ENCODE measurements at regions of chr4 and their contacts with region 1.

Region 1: DNA sequence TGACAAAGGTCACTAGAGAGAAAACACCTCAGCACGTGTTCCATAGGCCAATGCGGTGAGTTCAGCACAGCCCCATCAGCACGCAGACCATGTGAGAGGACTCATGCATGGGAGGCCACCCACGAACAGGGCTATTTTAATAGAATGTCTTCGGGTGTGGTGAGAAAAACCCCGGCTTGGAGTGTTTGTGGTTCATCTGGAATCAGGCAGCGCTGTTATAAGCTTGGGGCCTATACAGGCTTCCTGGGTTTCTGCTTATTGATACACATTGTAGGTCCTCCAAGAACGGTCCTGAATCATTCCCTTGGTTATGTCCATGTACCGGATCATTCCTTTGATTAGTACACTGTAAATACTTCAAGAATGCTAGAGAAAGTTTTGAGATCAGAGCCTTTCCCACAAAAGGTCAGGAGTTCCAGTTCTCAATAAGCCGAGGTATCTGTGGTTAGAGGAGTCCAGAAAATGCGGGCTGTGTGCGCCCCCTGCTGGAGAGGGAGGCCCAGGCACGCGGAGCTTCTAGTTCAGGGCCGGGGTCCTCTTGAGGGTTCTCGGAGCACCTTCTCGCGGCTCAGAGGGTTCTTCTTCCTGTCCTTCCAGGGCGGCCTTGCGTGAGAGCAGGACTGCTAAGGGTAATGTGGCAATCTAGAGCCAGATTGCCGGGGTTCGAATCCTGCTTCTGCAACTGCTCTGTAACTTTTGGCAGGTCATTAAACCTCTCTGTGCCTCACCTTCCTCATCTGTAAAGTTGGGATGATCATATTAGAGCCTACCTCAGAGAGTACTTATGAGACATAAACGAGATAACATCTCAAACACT is 51.8 kb downstream of the TLR10 start:
- DNase-seq: peak; percentile 73
- CTCF ChIP-seq: peak; percentile 91

Region 2: GRCh38 chr4:37802068-37802666 is 928.9 kb before region 1 on chr4:
- in situ Hi-C with region 1: loop called (anchors 25 kb)
- DNase-seq: no peak
- CTCF ChIP-seq: peak; percentile 50